ENCODE measurements at regions of chr22 and their contacts with region 1.

Region 1: GRCh38 chr22:39532215-39533071 is at the start of gene RPS19BP1:
- DNase-seq: peak; percentile 100
- H3K4me3 Mint-ChIP-seq: peak within 1 kb of the TSS; percentile 91
- H3K27ac Mint-ChIP-seq: peak within 1 kb of the TSS; percentile 80
- H3K4me1 Mint-ChIP-seq: peaks cover 58% of the 10 kb centered on the region
- H3K27me3 Mint-ChIP-seq: no peaks in the 10 kb centered on the region
- total RNA-seq, gene RPS19BP1: 65.2 to 67.5 TPM

Region 2: GRCh38 chr22:38755911-38756532 is 776.4 kb before region 1 on chr22 and contains the start of gene SUN2:
- CTCF ChIA-PET with region 1: no interaction called
- POLR2A ChIA-PET with region 1: no interaction called
- intact Hi-C with region 1: loop called (anchors 10 kb)
- DNase-seq: peak; percentile 95
- H3K4me3 Mint-ChIP-seq: peak within 1 kb of the TSS; percentile 88
- H3K27ac Mint-ChIP-seq: peak within 1 kb of the TSS; percentile 93
- H3K4me1 Mint-ChIP-seq: peaks cover 55% of the 10 kb centered on the region
- H3K27me3 Mint-ChIP-seq: no peaks in the 10 kb centered on the region
- total RNA-seq, gene SUN2: 159 to 168 TPM

Region 3: DNA sequence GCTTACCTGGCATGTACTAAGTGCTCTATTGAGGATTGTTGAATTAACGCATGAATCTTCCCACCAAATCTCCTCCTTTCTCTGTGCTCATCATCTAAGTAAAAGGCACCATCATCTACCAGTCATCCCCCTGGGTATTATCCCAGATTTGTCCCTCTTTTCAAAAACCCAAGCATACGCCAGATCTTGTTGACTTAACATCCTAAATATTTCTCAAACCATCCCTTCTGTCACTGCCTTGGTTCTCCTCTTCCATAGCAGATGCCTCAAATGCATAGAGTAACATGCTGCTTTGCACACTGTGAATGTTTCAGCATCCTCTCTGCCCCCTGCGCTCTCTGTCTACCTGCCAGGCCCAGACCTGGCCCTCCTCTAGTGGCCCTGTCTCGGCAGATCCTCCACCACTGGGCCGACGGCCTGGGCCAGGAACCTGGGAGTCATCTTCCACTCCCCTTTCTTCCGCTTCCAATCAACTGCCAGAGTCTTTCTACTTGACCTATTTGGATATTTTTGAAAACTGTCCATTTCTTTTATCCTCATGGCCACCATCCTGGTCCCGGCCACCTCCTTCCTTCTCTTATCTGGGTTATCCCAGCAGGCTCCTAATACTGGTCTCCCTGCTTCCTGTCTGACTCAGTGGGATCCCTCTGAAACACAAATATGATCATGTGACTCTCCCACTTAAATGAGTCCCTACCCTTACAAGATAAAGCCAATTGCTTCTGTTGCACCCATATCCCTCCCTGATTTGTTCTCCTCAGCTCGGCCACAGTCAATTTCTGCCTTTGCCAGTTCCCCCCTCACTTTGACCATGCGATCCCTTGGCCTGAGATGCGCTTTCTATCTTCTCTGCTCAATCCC is 136.3 kb before region 1 on chr22:
- CTCF ChIA-PET with region 1: interaction called, 13 read pairs
- POLR2A ChIA-PET with region 1: no interaction called
- intact Hi-C with region 1: loop called (anchors 1 kb)
- DNase-seq: no peak
- H3K4me3 Mint-ChIP-seq: no peak overlapping the region
- H3K27ac Mint-ChIP-seq: no peak overlapping the region
- H3K4me1 Mint-ChIP-seq: peaks cover 7% of the 10 kb centered on the region
- H3K27me3 Mint-ChIP-seq: no peaks in the 10 kb centered on the region

Region 4: GRCh38 chr22:39502109-39502788 is 30.2 kb before region 1 on chr22 and contains the start of gene MIEF1:
- CTCF ChIA-PET with region 1: interaction called, 387 read pairs
- POLR2A ChIA-PET with region 1: interaction called, 5 read pairs
- intact Hi-C with region 1: loop called (anchors 1 kb)
- DNase-seq: peak; percentile 98
- H3K4me3 Mint-ChIP-seq: peak within 1 kb of the TSS; percentile 96
- H3K27ac Mint-ChIP-seq: peak within 1 kb of the TSS; percentile 87
- H3K4me1 Mint-ChIP-seq: peaks cover 43% of the 10 kb centered on the region
- H3K27me3 Mint-ChIP-seq: no peaks in the 10 kb centered on the region
- total RNA-seq, gene MIEF1: 40.3 to 43.1 TPM

Region 5: DNA sequence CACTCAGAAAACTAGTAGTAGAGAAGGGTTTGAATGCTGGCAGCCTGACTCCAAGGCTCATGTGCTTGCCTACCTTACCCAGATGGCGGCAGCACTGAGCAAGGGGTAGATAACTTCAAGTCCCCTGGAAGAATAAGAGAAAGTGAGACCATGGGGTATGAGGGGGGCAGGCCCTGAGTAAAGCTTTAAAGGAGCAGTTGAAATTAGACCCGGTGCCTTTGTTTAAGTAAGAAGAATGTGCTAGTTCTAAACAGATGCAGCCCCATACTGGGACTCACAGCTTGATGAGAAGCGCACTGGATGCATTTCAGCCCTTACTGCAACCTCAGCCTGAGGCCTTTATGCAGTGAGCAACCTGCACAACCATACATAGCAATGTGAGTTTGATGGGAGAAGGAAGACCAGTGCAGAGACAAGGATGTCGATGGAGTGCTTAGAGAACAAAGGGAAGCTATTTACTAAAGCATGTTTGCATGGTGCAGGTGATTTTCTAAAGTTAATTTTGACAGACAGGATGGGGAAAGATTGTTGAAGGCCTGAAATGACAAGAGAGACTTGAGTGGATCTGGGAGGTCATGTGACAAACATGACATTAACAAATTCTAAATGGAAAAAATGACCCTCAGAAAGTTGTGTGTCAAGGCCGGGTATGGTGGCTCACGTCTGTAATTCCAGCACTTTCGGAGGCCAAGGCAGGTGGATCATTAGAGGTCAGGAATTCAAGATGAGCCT is 400.6 kb after region 1 on chr22:
- CTCF ChIA-PET with region 1: interaction called, 6 read pairs
- POLR2A ChIA-PET with region 1: no interaction called
- intact Hi-C with region 1: loop called (anchors 2 kb)
- DNase-seq: peak; percentile 76
- H3K4me3 Mint-ChIP-seq: peak overlapping the region; percentile 74
- H3K27ac Mint-ChIP-seq: peak overlapping the region; percentile 79
- H3K4me1 Mint-ChIP-seq: peaks cover 58% of the 10 kb centered on the region
- H3K27me3 Mint-ChIP-seq: no peaks in the 10 kb centered on the region

Region 6: GRCh38 chr22:40044102-40044869 is 511.8 kb after region 1 on chr22:
- CTCF ChIA-PET with region 1: interaction called, 29 read pairs
- POLR2A ChIA-PET with region 1: interaction called, 7 read pairs
- intact Hi-C with region 1: loop called (anchors 5 kb)
- DNase-seq: peak; percentile 99
- H3K4me3 Mint-ChIP-seq: peak overlapping the region; percentile 93
- H3K27ac Mint-ChIP-seq: peak overlapping the region; percentile 99
- H3K4me1 Mint-ChIP-seq: peaks cover 27% of the 10 kb centered on the region
- H3K27me3 Mint-ChIP-seq: peaks cover 6% of the 10 kb centered on the region

Measured in activated CD4-positive, alpha-beta memory T cell treated with anti-CD3 and anti-CD28 coated beads for 36 hours (primary cell).